ENCODE measurements at regions of chr14 and their contacts with region 1.

Region 1: DNA sequence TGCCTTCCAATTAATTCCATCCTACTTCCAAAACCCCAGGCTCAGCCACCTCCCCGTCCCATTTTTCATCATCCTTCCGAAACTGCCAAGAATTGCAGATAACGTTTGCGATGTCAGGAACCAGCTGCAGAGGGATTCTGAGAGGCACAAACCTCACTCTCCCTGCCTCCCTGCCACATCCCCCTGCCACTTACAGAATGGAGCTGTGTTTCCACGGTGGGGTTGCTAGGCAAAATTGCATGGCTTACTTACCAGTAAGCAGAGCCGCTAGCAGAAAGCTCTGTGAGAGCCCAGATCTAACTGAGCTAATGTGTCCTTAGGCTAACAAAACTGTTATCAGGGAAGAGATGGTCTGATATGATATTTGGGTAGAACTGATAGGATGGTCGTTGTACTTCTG is 127.4 kb downstream of the KCNK10 start:
- DNase-seq: peak in 5 of 10 donors; percentile 31 to 53 (median 47)
- H3K4me3 ChIP-seq: peak overlapping the region in 44 of 59 donors; percentile 2 to 47 (median 28)
- H3K27ac ChIP-seq: peak overlapping the region in 29 of 59 donors; percentile 0 to 75 (median 32)
- H3K27me3 ChIP-seq: peaks cover 0 to 4% (median 0%) of the 10 kb centered on the region in 45 donors
- CTCF ChIP-seq: no peak

Region 2: GRCh38 chr14:88089445-88089844 is 106.2 kb before region 1 on chr14:
- intact Hi-C with region 1: no loop called
- DNase-seq: no peak
- H3K4me3 ChIP-seq: no peak overlapping the region
- H3K27ac ChIP-seq: peak overlapping the region in 15 of 59 donors; percentile 8 to 71 (median 28)
- H3K27me3 ChIP-seq: no peaks in the 10 kb centered on the region
- CTCF ChIP-seq: no peak

Region 3: GRCh38 chr14:88281447-88281846 is 85.8 kb after region 1 on chr14:
- intact Hi-C with region 1: no loop called
- DNase-seq: no peak
- H3K4me3 ChIP-seq: no peak overlapping the region
- H3K27ac ChIP-seq: no peak overlapping the region
- H3K27me3 ChIP-seq: no peaks in the 10 kb centered on the region
- CTCF ChIP-seq: no peak

Region 4: GRCh38 chr14:88323523-88324199 is 128.0 kb after region 1 on chr14:
- intact Hi-C with region 1: loop called in 1 of 2 experiments (anchors 2 kb)
- DNase-seq: peak in 8 of 10 donors; percentile 30 to 77 (median 50)
- H3K4me3 ChIP-seq: peak overlapping the region; percentile 47 to 78 (median 63)
- H3K27ac ChIP-seq: peak overlapping the region in 53 of 59 donors; percentile 1 to 88 (median 77)
- H3K27me3 ChIP-seq: peaks cover 0 to 36% (median 7%) of the 10 kb centered on the region in 45 donors
- CTCF ChIP-seq: no peak